ENCODE measurements at regions of chr7 and their contacts with region 1.

Region 1: DNA sequence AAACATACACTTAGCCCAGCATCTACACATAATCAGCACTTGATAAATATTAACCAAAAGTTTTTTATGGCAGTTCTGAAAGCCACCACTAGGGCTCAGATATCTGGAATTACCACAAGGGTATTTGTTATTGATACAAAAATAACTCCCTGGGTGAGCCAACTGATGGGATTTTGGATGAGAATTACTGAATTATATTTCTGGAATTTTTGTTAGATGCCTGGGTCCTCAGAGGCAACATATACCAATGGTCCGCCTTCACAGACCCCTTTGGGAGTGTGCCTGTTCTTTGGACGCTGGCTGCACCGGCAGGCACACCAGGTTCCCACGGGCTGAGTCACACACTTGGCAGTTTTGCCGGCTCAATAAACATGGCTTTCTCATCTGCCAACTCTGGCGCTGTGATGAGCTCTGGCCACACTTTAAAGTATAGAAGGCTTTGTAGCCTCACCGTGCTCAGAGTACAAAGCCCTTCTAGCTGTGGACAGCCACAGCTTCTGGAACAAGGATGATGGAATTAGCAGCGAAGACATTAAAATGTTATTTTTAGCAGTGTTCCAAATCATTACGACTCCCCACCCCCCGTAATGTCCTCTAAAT is 24.5 kb upstream of the EEPD1 start:
- DNase-seq: peak; percentile 87 to 91
- ATAC-seq: peak; percentile 65 to 80
- H3K4me3 ChIP-seq: peak overlapping the region in 2 of 4 donors; percentile 22 to 37
- H3K27ac ChIP-seq: peak overlapping the region; percentile 86 to 98 (median 95)
- H3K4me1 ChIP-seq: peaks cover 50 to 51% of the 10 kb centered on the region in 2 donors
- H3K27me3 ChIP-seq: no peaks in the 10 kb centered on the region
- CTCF ChIP-seq: peak; percentile 86 to 91 (median 88)
- POLR2A ChIP-seq: peak in 1 of 2 donors; percentile 45

Region 2: DNA sequence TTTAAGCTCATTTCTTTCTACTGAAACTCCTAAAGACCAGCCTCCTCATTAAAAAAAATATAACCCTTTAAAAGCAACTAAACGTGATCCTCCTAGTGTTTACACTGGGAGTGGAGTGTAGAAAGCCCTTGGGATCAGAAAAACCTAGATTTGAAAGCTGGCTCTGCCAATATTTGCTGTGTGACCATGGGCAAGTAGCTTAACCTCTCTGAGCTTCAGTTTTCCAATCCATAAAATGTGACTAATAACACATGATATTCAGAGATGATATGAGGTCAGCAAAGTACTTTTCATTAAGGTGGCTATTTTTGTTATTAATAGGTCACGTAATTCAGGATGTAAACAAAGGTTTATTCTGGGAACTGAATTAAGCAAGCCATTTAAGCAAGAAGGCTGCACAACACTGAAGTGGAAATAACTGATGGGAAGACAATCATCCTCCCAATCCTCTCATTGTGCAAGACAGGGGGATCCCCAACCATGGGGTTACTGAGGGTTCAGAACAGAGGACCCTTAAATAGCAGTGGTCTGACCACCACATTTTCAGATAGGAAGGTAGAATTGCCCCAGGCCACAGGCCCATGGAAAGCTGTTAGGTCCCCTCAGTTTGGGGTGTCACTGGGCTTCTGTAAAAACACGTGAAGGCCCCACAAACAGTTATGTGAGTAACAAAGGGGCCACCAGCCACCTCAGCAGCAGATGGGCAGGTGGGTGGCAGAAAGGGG is 24.5 kb before region 1 on chr7:
- in situ Hi-C with region 1: no loop called
- intact Hi-C with region 1: loop called (anchors 2 kb)
- DNase-seq: no peak
- ATAC-seq: peak; percentile 89
- H3K4me3 ChIP-seq: no peak overlapping the region
- H3K27ac ChIP-seq: peak overlapping the region; percentile 51 to 80 (median 70)
- H3K4me1 ChIP-seq: peaks cover 17 to 20% of the 10 kb centered on the region in 2 donors
- H3K27me3 ChIP-seq: no peaks in the 10 kb centered on the region
- CTCF ChIP-seq: no peak
- POLR2A ChIP-seq: peak in 1 of 2 donors; percentile 30

Region 3: GRCh38 chr7:36152756-36153570 is 24.4 kb after region 1 on chr7 and contains the start of gene EEPD1:
- in situ Hi-C with region 1: no loop called
- intact Hi-C with region 1: loop called (anchors 1 kb)
- DNase-seq: peak; percentile 100
- ATAC-seq: peak; percentile 71 to 81
- H3K4me3 ChIP-seq: peak within 1 kb of the TSS; percentile 85 to 93 (median 88)
- H3K27ac ChIP-seq: peak within 1 kb of the TSS; percentile 94 to 98 (median 95)
- H3K4me1 ChIP-seq: peaks cover 32 to 37% of the 10 kb centered on the region in 2 donors
- H3K27me3 ChIP-seq: no peaks in the 10 kb centered on the region
- CTCF ChIP-seq: no peak
- POLR2A ChIP-seq: peak; percentile 91 to 96
- total RNA-seq, gene EEPD1: 41.0 to 68.5 (median 61.3) TPM